Endothelial cell of umbilical vein (primary cell): ENCODE measurements at regions of chr1 and their contacts with region 1.

Region 1: DNA sequence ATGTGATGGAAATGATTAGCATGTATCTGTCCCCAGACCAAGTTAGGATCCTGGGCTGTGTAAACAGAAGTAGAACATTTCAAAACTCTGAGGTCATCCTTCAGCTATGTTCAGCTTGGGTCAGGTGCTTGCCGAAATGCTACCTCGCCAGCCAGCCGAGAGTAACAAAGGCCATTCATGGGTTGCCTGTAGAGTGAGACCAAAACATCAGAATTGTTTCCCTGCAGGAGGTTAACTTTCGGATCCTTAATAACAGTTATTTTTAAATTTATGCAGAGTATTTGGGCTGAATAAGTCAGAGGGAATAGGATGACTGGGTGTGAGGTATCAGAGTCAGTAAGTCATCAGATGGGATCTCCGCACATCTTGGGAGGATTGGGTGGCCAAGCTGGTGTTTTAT is 35.6 kb downstream of the SMYD2 start:
- DNase-seq: no peak
- H3K4me3 ChIP-seq: no peak overlapping the region
- H3K27ac ChIP-seq: no peak overlapping the region
- H3K4me1 ChIP-seq: no peaks in the 10 kb centered on the region
- H3K27me3 ChIP-seq: no peaks in the 10 kb centered on the region
- CTCF ChIP-seq: no peak
- POLR2A ChIP-seq: no peak

Region 2: GRCh38 chr1:214220891-214221290 is 95.7 kb before region 1 on chr1:
- CTCF ChIA-PET with region 1: no interaction called
- POLR2A ChIA-PET with region 1: no interaction called
- dilution Hi-C with region 1: no loop called
- intact Hi-C with region 1: no loop called
- DNase-seq: no peak
- H3K4me3 ChIP-seq: no peak overlapping the region
- H3K27ac ChIP-seq: no peak overlapping the region
- H3K4me1 ChIP-seq: peaks cover 7% of the 10 kb centered on the region
- H3K27me3 ChIP-seq: peaks cover 9 to 33% of the 10 kb centered on the region in 2 experiments
- CTCF ChIP-seq: no peak
- POLR2A ChIP-seq: no peak

Region 3: GRCh38 chr1:214303141-214303930 is 13.3 kb before region 1 on chr1:
- CTCF ChIA-PET with region 1: interaction called, 10 read pairs
- POLR2A ChIA-PET with region 1: no interaction called
- dilution Hi-C with region 1: no loop called
- intact Hi-C with region 1: no loop called
- DNase-seq: no peak
- H3K4me3 ChIP-seq: no peak overlapping the region
- H3K27ac ChIP-seq: no peak overlapping the region
- H3K4me1 ChIP-seq: no peaks in the 10 kb centered on the region
- H3K27me3 ChIP-seq: no peaks in the 10 kb centered on the region
- CTCF ChIP-seq: no peak
- POLR2A ChIP-seq: no peak